ENCODE measurements at regions of chr16 and their contacts with region 1.

Region 1: DNA sequence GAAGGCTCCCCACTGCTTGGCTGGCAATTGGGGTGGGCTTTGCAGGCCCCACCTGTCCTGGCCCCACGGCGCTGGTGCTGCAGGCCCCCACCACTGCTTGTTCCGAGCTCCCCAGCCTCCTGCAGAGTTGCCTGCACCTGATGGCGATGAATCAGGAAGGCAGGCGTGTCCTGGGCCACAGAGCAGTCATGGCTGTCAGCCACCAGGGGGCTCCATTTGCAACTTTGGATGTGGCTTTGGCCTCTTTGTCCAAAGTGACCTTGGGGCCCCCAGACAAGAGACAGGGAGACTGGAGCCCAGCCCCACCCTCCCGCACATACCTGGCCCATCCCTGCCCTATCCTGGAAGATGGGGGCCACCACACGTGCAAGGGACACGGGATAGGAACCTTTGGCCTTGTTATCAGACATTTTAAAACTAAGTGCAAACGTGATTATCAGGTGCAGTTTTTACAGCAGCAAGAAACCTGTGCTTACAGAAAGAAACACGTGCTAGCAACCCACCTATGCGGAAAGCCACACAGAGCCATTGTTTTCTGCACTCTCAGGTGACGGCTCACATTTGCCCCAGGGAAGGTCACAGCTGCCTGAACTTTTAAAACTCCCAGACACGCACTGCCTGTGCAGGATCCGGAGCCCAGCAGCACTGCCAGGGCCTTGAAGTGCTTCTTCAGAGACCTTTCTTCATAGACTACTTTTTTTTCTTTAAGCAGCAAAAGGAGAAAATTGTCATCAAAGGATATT is at the start of gene DNASE1:
- DNase-seq: peak; percentile 76 to 90 (median 82)
- ATAC-seq: peak; percentile 96
- H3K4me3 ChIP-seq: no peak within 1 kb of the TSS
- H3K27ac ChIP-seq: peak within 1 kb of the TSS; percentile 67
- H3K4me1 ChIP-seq: peaks cover 6 to 28% of the 10 kb centered on the region in 2 experiments; a peak in 4 of 5 replicates
- H3K27me3 ChIP-seq: no peaks in the 10 kb centered on the region
- CTCF ChIP-seq: peak; percentile 79 to 86 (median 85)
- EP300 ChIP-seq: no peak
- POLR2A ChIP-seq: 0 out of 2 replicates have a peak, but pooled peaks have one; percentile 4
- RAD21 ChIP-seq: peak in 1 of 2 experiments; percentile 60; a peak in 3 of 4 replicates
- polyA plus RNA-seq, gene DNASE1: 0.53 to 0.84 TPM

Region 2: DNA sequence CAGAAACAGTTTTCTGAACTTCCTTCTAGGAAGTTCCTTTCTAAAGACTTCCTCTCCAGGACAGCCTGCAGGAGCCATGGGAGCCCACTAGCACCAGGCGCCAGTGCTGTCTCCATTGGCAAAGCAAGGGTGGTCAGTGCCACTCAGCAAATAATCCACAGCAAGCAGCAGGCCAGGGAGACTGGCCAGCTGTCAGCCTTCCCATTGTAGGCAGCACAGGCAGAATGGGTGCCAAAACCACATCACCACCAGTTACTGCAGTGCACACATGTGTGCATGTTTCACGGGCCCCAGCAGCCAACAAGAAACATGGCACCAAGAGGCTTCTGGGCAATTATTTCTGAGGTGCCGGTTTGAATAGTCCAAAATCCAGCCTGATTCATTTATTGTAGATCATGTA is 26.8 kb after region 1 on chr16:
- CTCF ChIA-PET with region 1: no interaction called
- POLR2A ChIA-PET with region 1: interaction called, 10 read pairs
- in situ Hi-C with region 1: no loop called
- intact Hi-C with region 1: no loop called
- DNase-seq: no peak
- ATAC-seq: no peak
- H3K4me3 ChIP-seq: no peak overlapping the region
- H3K27ac ChIP-seq: no peak overlapping the region
- H3K4me1 ChIP-seq: no peaks in the 10 kb centered on the region
- H3K27me3 ChIP-seq: no peaks in the 10 kb centered on the region
- CTCF ChIP-seq: no peak
- EP300 ChIP-seq: no peak
- POLR2A ChIP-seq: no peak
- RAD21 ChIP-seq: no peak